ENCODE measurements at regions of chr17 and their contacts with region 1.

Region 1: GRCh38 chr17:63611354-63611753 is 10.7 kb downstream of the TACO1 start:
- DNase-seq: no peak
- H3K4me3 ChIP-seq: no peak overlapping the region
- H3K4me3 Mint-ChIP-seq: peak overlapping the region in 5 of 7 donors; percentile 15 to 71 (median 54)
- H3K27ac ChIP-seq: no peak overlapping the region
- H3K27ac Mint-ChIP-seq: peak overlapping the region; percentile 45 to 93 (median 84)
- H3K4me1 ChIP-seq: peaks cover 30% of the 10 kb centered on the region
- H3K4me1 Mint-ChIP-seq: peaks cover 29 to 35% (median 34%) of the 10 kb centered on the region in 3 donors
- H3K27me3 ChIP-seq: no peaks in the 10 kb centered on the region
- H3K27me3 Mint-ChIP-seq: no peaks in the 10 kb centered on the region

Region 2: DNA sequence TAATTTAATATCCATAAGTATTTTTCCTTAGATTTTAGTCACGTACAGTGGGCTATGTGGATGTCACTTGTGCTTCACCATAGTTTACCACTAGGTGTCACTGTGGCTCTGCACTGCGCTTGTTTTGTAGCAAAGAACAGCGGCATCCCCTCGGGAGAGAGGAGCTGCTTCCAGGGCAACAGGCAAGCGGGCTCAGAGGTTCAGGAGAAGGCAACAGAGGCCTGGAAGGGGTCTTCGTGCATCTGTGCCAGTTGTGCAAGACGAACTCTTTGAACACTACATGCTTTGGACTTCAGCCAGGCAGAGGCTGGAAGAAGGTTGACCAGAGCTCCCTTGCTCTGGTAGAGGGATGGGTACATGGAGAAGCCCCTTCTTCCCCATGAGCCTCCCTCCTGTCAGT is 185.9 kb before region 1 on chr17:
- CTCF ChIA-PET with region 1: interaction called, 174 read pairs
- POLR2A ChIA-PET with region 1: interaction called, 3 read pairs
- DNase-seq: peak; percentile 50 to 78 (median 62)
- H3K4me3 ChIP-seq: no peak overlapping the region
- H3K4me3 Mint-ChIP-seq: peak overlapping the region; percentile 47 to 74 (median 62)
- H3K27ac ChIP-seq: no peak overlapping the region
- H3K27ac Mint-ChIP-seq: peak overlapping the region in 7 of 8 donors; percentile 31 to 81 (median 68)
- H3K4me1 ChIP-seq: peaks cover 36% of the 10 kb centered on the region
- H3K4me1 Mint-ChIP-seq: peaks cover 35 to 51% (median 37%) of the 10 kb centered on the region in 3 donors
- H3K27me3 ChIP-seq: no peaks in the 10 kb centered on the region
- H3K27me3 Mint-ChIP-seq: no peaks in the 10 kb centered on the region

Region 3: GRCh38 chr17:63445979-63446691 is 165.2 kb before region 1 on chr17 and contains the start of gene CYB561:
- CTCF ChIA-PET with region 1: interaction called, 52 read pairs
- POLR2A ChIA-PET with region 1: no interaction called
- DNase-seq: peak; percentile 59 to 86 (median 75)
- H3K4me3 ChIP-seq: peak within 1 kb of the TSS; percentile 65
- H3K4me3 Mint-ChIP-seq: peak within 1 kb of the TSS; percentile 82 to 98 (median 84)
- H3K27ac ChIP-seq: peak within 1 kb of the TSS; percentile 87
- H3K27ac Mint-ChIP-seq: peak within 1 kb of the TSS; percentile 90 to 99 (median 96)
- H3K4me1 ChIP-seq: peaks cover 20% of the 10 kb centered on the region
- H3K4me1 Mint-ChIP-seq: peaks cover 24 to 61% (median 36%) of the 10 kb centered on the region in 3 donors
- H3K27me3 ChIP-seq: no peaks in the 10 kb centered on the region
- H3K27me3 Mint-ChIP-seq: peaks cover 0 to 4% of the 10 kb centered on the region in 2 donors
- total RNA-seq, gene CYB561: 14.3 to 16.6 TPM

Region 4: GRCh38 chr17:63549946-63550807 is 61.2 kb before region 1 on chr17 and contains the start of gene DCAF7:
- CTCF ChIA-PET with region 1: interaction called, 21 read pairs
- POLR2A ChIA-PET with region 1: interaction called, 8 read pairs
- DNase-seq: peak; percentile 99
- H3K4me3 ChIP-seq: peak within 1 kb of the TSS; percentile 77
- H3K4me3 Mint-ChIP-seq: peak within 1 kb of the TSS; percentile 82 to 99 (median 98)
- H3K27ac ChIP-seq: peak within 1 kb of the TSS; percentile 96
- H3K27ac Mint-ChIP-seq: peak within 1 kb of the TSS; percentile 91 to 99 (median 96)
- H3K4me1 ChIP-seq: peaks cover 40% of the 10 kb centered on the region
- H3K4me1 Mint-ChIP-seq: peaks cover 41 to 48% (median 42%) of the 10 kb centered on the region in 3 donors
- H3K27me3 ChIP-seq: no peaks in the 10 kb centered on the region
- H3K27me3 Mint-ChIP-seq: no peaks in the 10 kb centered on the region
- total RNA-seq, gene DCAF7: 99.1 to 102 TPM

Region 5: GRCh38 chr17:63600569-63601438 is 10.6 kb before region 1 on chr17 and contains the start of gene TACO1:
- CTCF ChIA-PET with region 1: interaction called, 15 read pairs
- POLR2A ChIA-PET with region 1: interaction called, 3 read pairs
- DNase-seq: peak; percentile 48 to 76 (median 57)
- H3K4me3 ChIP-seq: peak within 1 kb of the TSS; percentile 77
- H3K4me3 Mint-ChIP-seq: peak within 1 kb of the TSS; percentile 92 to 94 (median 93)
- H3K27ac ChIP-seq: peak within 1 kb of the TSS; percentile 75
- H3K27ac Mint-ChIP-seq: peak within 1 kb of the TSS; percentile 77 to 97 (median 96)
- H3K4me1 ChIP-seq: peaks cover 45% of the 10 kb centered on the region
- H3K4me1 Mint-ChIP-seq: peaks cover 39 to 54% (median 50%) of the 10 kb centered on the region in 3 donors
- H3K27me3 ChIP-seq: no peaks in the 10 kb centered on the region
- H3K27me3 Mint-ChIP-seq: no peaks in the 10 kb centered on the region
- total RNA-seq, gene TACO1: 35.9 to 40.0 TPM

Region 6: DNA sequence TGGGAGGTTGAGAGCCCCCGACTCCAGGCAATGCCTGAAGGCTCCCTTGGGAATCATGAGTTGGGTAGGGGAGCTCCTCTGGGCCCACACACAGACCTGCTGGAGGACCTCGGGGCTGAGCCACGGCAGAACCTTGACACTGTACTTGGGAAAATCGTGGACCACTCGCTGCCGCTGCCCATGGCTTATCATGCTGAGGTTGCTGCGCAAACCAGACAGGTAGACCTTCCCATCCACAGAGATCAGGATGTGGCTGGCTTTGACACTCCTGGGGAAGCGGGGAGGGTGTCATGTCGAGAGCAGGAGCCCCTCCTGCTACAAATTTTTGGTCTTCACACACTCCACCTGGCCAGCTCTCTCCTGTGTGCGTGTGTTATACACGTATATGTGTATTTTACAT is 95.8 kb after region 1 on chr17:
- CTCF ChIA-PET with region 1: interaction called, 14 read pairs
- POLR2A ChIA-PET with region 1: interaction called, 3 read pairs
- DNase-seq: peak in 4 of 5 donors; percentile 21 to 67 (median 61)
- H3K4me3 ChIP-seq: peak overlapping the region; percentile 55
- H3K4me3 Mint-ChIP-seq: peak overlapping the region; percentile 79 to 88 (median 84)
- H3K27ac ChIP-seq: peak overlapping the region; percentile 62
- H3K27ac Mint-ChIP-seq: peak overlapping the region; percentile 80 to 99 (median 95)
- H3K4me1 ChIP-seq: peaks cover 86% of the 10 kb centered on the region
- H3K4me1 Mint-ChIP-seq: peaks cover 70 to 85% (median 74%) of the 10 kb centered on the region in 3 donors
- H3K27me3 ChIP-seq: no peaks in the 10 kb centered on the region
- H3K27me3 Mint-ChIP-seq: no peaks in the 10 kb centered on the region